Adrenal gland (tissue), 19 donors: ENCODE measurements at regions of chr4 and their contacts with region 1.

Region 1: GRCh38 chr4:52545099-52546069 is 113.7 kb downstream of the USP46 start:
- DNase-seq: peak; percentile 73 to 91 (median 86)
- H3K4me3 ChIP-seq: peak overlapping the region in 1 of 4 donors; percentile 45
- H3K27ac ChIP-seq: no peak overlapping the region
- H3K4me1 ChIP-seq: peaks cover 0 to 4% of the 10 kb centered on the region in 2 donors
- H3K27me3 ChIP-seq: no peaks in the 10 kb centered on the region
- CTCF ChIP-seq: peak; percentile 84 to 95 (median 92)
- POLR2A ChIP-seq: no peak

Region 2: DNA sequence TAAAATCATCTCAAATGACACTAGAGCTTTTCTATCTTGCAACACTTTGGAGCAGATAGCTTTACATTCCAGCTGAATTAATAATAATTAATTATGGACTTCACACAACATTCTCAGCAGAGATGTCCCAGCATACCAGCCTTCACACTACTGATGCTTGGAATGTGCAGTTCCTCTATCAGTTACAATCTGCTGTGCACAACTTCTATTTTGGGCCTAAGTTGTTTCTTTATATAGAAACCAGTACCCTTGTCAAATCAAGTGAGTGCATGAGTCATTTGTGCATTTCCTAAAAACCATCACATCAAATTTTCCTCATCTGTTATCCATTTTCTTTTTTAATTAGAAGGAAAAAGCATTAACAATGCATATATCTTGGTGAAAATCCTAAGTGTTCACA is 308.0 kb after region 1 on chr4:
- intact Hi-C with region 1: loop called in 1 of 2 experiments (anchors 10 kb)
- DNase-seq: no peak
- H3K4me3 ChIP-seq: no peak overlapping the region
- H3K27ac ChIP-seq: peak overlapping the region in 1 of 5 donors; percentile 33
- H3K4me1 ChIP-seq: peaks cover 0 to 14% of the 10 kb centered on the region in 2 donors
- H3K27me3 ChIP-seq: no peaks in the 10 kb centered on the region
- CTCF ChIP-seq: no peak
- POLR2A ChIP-seq: no peak

Region 3: GRCh38 chr4:52939739-52940138 is 394.4 kb after region 1 on chr4:
- intact Hi-C with region 1: no loop called
- DNase-seq: no peak
- H3K4me3 ChIP-seq: no peak overlapping the region
- H3K27ac ChIP-seq: no peak overlapping the region
- H3K4me1 ChIP-seq: peaks cover 0 to 1% of the 10 kb centered on the region in 2 donors
- H3K27me3 ChIP-seq: no peaks in the 10 kb centered on the region
- CTCF ChIP-seq: no peak
- POLR2A ChIP-seq: no peak